ENCODE measurements at regions of chr14 and their contacts with region 1.

Region 1: GRCh38 chr14:69611201-69612011 is at the start of gene SUSD6:
- DNase-seq: peak; percentile 95
- H3K4me3 ChIP-seq: peak within 1 kb of the TSS; percentile 78
- H3K27ac ChIP-seq: peak within 1 kb of the TSS; percentile 99
- H3K4me1 ChIP-seq: peaks cover 63% of the 10 kb centered on the region
- CTCF ChIP-seq: no peak
- total RNA-seq, gene SUSD6: 19.3 and 23.1 TPM in 2 replicates

Region 2: DNA sequence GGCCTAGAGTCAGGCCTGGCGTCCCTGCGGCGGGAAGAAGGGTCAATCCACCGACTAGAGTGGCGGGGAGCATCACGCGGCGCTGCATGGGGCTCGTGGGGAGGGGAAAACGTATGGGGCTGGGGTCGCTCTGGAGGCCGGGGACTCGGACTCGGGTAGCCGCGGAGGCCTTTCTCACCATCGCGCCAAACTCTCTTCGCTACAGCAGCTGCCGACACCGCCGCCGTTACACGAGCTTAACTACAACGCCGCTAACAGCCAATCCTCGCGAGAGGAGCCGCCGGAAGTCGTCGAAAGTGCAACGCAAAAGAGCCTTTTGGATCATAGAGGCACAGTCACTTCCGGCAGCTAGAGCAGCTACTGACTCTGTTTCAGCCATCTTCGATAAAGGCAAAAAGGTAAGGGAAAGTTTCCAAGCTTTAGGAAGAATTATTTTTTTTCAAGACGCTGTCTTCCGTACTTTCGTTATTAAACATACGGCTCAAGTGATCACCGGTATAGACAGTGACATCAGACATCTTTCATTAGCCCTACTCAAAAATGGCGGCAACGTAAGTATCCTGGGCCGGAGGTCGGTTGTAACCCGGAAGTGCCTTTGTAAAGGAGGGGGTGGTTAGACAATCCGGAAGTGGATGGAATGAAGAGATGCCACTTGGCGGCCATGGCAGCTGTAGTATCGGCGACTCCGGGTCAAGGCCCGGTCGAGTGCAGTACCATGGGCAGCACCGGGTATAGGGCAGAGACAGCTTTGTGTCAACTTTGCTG is 213.2 kb before region 1 on chr14 and contains the starts of genes ERH and SLC39A9:
- CTCF ChIA-PET with region 1: no interaction called
- POLR2A ChIA-PET with region 1: interaction called, 3 read pairs
- intact Hi-C with region 1: loop called (anchors 5 kb)
- DNase-seq: peak; percentile 99
- H3K4me3 ChIP-seq: peak within 1 kb of the TSS; percentile 82
- H3K27ac ChIP-seq: peak within 1 kb of the TSS; percentile 75
- H3K4me1 ChIP-seq: peaks cover 57% of the 10 kb centered on the region
- CTCF ChIP-seq: no peak
- total RNA-seq, gene ERH: 204 and 435 TPM in 2 replicates
- total RNA-seq, gene SLC39A9: 70.4 and 86.5 TPM in 2 replicates

Region 3: DNA sequence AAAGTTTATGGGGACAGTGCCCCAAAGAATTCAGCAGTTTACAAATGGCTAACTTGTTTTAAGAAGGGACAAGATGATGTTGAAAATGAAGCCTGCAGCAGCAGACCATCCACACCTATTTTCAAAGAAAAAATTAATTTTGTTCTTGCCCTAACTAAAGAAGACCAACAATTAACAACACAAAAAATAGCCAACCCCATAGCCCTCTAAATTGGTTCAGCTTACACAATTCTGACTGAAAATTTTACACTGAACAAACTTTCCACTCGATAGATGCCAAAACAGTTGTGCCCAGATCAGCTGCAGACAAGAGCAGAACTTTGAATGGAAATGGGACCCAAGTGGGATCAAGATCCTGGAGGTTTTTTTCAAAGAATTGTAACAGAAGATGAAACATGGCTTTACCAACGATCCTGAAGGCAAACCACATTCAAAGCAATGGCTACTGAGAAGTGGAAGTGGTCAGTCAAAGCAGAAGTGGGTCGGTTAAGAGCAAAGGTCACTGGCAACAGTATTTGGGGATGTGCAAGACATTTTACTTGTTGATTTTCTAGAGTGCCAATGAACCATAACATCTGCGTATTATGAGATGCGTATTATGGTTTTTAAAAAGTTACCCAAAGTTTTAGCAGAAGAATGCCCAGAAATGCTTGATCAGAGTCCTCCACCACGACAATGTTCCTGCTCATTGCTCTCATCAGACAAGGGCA is 183.0 kb before region 1 on chr14:
- CTCF ChIA-PET with region 1: no interaction called
- POLR2A ChIA-PET with region 1: no interaction called
- intact Hi-C with region 1: no loop called
- DNase-seq: no peak
- H3K4me3 ChIP-seq: no peak overlapping the region
- H3K27ac ChIP-seq: no peak overlapping the region
- H3K4me1 ChIP-seq: no peaks in the 10 kb centered on the region
- CTCF ChIP-seq: no peak

Region 4: DNA sequence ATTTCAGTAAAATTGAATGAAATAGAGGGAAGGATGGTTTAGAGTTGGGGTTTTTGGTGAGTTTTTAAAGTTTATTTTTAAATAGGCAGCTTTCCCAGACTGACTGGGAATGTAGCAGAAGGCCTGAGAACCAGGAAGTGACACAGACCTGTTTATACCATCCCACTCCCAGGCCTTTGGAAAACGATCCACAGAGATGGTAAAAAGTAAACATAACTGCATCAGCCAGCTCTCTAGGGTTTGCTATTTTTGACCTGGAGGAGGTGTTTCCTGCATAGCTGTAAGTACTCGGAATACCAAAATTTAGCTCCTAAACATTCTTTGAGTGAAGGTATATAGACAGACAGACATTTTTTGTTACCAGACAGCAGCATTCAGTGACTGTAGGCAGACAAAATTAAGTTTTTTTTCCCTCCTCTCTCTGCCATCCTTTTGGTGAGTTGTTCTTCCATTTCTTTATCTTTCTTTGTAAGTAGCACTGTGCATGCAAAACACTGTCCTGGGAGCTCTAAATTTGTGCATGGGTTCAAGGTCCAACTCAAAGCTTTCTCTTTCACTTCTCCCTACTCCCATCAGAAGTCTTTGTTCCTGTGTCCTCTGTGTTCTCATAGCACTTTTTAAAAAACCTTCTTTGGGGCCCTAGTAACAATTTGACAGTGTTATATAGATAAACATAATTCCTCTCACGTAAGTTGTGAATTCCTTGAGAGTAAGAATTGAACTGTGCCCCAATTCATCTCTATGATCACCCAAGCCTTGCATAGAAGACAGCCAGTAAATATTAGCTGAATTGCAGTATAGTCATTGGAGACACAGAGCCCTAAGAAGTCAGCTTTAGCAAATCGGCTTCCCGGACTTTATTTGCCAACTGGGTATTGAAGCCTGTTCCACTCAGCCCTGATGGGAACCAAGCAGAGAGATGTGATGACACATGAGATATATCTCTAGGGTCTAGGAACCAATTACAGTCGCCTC is 37.4 kb after region 1 on chr14:
- CTCF ChIA-PET with region 1: no interaction called
- POLR2A ChIA-PET with region 1: interaction called, 11 read pairs
- intact Hi-C with region 1: loop called (anchors 1 kb)
- DNase-seq: peak; percentile 50
- H3K4me3 ChIP-seq: peak overlapping the region; percentile 48
- H3K27ac ChIP-seq: peak overlapping the region; percentile 58
- H3K4me1 ChIP-seq: peaks cover 92% of the 10 kb centered on the region
- CTCF ChIP-seq: no peak

Region 5: GRCh38 chr14:69693145-69693544 is 81.7 kb after region 1 on chr14:
- CTCF ChIA-PET with region 1: no interaction called
- POLR2A ChIA-PET with region 1: interaction called, 3 read pairs
- intact Hi-C with region 1: loop called (anchors 1 kb)
- DNase-seq: peak; percentile 89
- H3K4me3 ChIP-seq: peak overlapping the region; percentile 41
- H3K27ac ChIP-seq: peak overlapping the region; percentile 84
- H3K4me1 ChIP-seq: peaks cover 74% of the 10 kb centered on the region
- CTCF ChIP-seq: no peak

Region 6: DNA sequence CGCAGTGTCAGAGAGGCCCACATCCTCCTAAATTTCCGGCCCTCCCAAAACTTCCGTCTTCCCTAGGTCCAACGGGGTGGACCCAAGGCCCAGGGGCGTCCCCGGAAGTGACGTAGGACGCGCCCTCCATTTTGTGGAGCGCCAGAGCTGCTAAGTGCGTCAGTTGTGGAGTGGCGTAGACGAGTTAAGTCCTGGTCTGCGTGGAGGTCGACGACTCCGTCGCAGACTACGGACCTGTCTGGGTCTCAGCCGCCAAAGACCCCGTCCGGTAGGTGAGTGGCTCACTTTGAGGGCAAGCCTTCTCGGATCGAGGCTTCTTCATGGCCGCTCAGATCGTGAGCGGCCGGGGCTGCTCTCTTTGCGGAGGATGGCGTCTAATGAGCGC is 155.6 kb after region 1 on chr14 and contains the start of gene SRSF5:
- CTCF ChIA-PET with region 1: no interaction called
- POLR2A ChIA-PET with region 1: interaction called, 4 read pairs
- intact Hi-C with region 1: loop called (anchors 5 kb)
- DNase-seq: peak; percentile 97
- H3K4me3 ChIP-seq: peak within 1 kb of the TSS; percentile 93
- H3K27ac ChIP-seq: peak within 1 kb of the TSS; percentile 87
- H3K4me1 ChIP-seq: peaks cover 14% of the 10 kb centered on the region
- CTCF ChIP-seq: no peak
- total RNA-seq, gene SRSF5: 341 and 456 TPM in 2 replicates

Region 7: DNA sequence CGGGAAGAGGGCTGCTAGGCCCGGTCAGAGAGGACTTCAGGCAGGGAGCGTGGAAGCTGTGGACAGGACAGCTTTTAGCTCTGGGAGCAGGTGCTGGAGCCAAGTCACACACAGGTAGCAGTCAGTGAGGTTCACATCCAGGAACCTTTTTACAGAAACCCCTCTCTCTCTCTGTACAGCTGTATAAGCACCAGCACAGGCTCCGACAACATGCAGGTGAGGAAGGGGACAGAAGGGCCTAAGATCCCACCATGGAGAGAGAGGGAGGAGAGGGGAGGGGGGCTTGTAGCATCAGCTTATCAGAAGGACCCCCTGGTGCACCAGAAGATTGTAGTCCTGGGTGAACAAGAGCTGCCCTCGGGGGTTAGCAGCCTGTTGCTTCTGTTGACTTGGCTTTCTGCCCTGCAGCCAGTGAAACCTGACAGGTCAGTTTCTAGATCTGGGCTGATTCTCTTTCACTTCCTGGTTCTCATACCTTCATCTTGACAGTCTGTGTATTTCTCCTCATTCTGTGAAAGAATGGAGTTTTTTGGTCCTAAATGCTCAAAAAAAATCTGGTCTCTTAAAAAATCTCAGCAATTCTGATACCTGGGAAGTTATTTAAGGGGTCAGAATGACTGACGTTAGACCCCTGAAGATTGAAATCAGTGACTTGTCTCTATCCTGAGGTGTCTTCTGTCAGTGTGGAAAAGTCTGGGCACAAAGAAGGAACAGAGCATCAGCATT is 1053.9 kb after region 1 on chr14:
- CTCF ChIA-PET with region 1: no interaction called
- POLR2A ChIA-PET with region 1: no interaction called
- intact Hi-C with region 1: loop called (anchors 5 kb)
- DNase-seq: peak; percentile 82
- H3K4me3 ChIP-seq: peak overlapping the region; percentile 47
- H3K27ac ChIP-seq: peak overlapping the region; percentile 93
- H3K4me1 ChIP-seq: peaks cover 100% of the 10 kb centered on the region
- CTCF ChIP-seq: no peak

Measured in OCI-LY7 (cell line).